ENCODE measurements at regions of chr11 and their contacts with region 1.

Region 1: GRCh38 chr11:102346748-102347461 is at the start of gene BIRC2:
- DNase-seq: peak; percentile 95
- H3K4me3 ChIP-seq: peak within 1 kb of the TSS; percentile 76
- H3K27ac ChIP-seq: peak within 1 kb of the TSS; percentile 78
- H3K4me1 ChIP-seq: peaks cover 25% of the 10 kb centered on the region
- CTCF ChIP-seq: peak; percentile 75
- total RNA-seq, gene BIRC2: 32.6 and 38.0 TPM in 2 replicates

Region 2: DNA sequence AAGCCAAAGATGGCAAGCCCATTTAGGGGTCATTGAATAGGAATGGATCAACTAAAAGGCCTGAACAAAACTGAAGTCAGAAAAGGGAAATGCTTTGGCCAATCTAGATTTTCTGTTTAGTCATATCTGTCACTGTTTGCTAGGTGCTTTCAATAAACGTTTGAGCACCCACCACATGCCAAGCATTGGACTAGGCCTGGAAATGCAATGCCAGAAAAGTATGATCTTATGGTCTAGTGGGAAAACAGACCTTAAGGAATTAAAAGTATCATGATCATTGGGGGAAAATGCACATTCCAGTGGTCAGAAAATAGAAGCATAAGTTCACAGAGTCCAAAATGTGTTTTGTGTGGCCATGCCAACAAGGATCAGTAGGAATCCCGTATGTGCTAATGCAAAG is 106.4 kb before region 1 on chr11:
- CTCF ChIA-PET with region 1: no interaction called
- POLR2A ChIA-PET with region 1: no interaction called
- intact Hi-C with region 1: no loop called
- DNase-seq: no peak
- H3K4me3 ChIP-seq: no peak overlapping the region
- H3K27ac ChIP-seq: no peak overlapping the region
- H3K4me1 ChIP-seq: peaks cover 25% of the 10 kb centered on the region
- CTCF ChIP-seq: no peak

Region 3: DNA sequence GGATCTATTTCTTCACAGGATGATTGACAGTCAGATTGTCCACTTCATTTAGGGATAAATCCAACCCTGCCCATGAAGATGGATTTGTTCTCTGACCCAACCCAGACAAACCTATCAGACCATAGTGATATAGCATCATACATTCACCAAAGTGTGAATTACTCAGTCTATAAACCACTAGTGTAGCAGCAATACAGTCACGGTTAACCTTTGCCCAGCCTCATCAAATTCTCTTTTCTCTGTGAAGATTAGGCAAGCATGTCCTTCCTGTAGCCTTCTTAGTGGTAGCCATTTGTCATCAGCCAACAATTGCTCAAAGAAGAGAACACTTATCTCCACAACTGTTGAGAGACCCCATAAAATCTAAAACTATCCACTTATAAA is 14.3 kb before region 1 on chr11:
- CTCF ChIA-PET with region 1: interaction called, 3 read pairs
- POLR2A ChIA-PET with region 1: interaction called, 10 read pairs
- intact Hi-C with region 1: no loop called
- DNase-seq: no peak
- H3K4me3 ChIP-seq: no peak overlapping the region
- H3K27ac ChIP-seq: no peak overlapping the region
- H3K4me1 ChIP-seq: no peaks in the 10 kb centered on the region
- CTCF ChIP-seq: no peak

Region 4: GRCh38 chr11:102361086-102362031 is 14.5 kb after region 1 on chr11:
- CTCF ChIA-PET with region 1: interaction called, 7 read pairs
- POLR2A ChIA-PET with region 1: interaction called, 17 read pairs
- intact Hi-C with region 1: no loop called
- DNase-seq: peak; percentile 62
- H3K4me3 ChIP-seq: no peak overlapping the region
- H3K27ac ChIP-seq: no peak overlapping the region
- H3K4me1 ChIP-seq: peaks cover 16% of the 10 kb centered on the region
- CTCF ChIP-seq: no peak

Region 5: DNA sequence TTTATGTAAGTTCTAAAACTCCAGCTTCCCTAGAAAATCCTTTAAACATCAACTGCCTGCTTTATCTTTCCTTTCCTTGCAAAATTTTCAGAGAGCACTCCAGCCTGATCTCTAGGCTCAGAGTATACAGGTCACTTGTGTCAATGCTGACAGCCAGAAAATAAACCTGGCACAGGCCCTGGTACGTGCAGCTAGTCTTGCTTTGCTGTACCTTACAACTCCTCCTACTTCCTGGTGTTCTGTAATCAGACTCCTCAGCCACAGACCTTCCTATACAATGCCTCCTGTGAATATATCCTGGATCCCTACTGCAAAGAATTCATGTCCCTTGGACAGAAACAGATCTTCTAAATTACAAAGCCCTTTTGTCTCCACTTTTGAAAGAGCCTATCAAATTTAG is 129.9 kb after region 1 on chr11:
- CTCF ChIA-PET with region 1: no interaction called
- POLR2A ChIA-PET with region 1: no interaction called
- intact Hi-C with region 1: no loop called
- DNase-seq: peak; percentile 79
- H3K4me3 ChIP-seq: no peak overlapping the region
- H3K27ac ChIP-seq: peak overlapping the region; percentile 81
- H3K4me1 ChIP-seq: peaks cover 60% of the 10 kb centered on the region
- CTCF ChIP-seq: no peak

Region 6: DNA sequence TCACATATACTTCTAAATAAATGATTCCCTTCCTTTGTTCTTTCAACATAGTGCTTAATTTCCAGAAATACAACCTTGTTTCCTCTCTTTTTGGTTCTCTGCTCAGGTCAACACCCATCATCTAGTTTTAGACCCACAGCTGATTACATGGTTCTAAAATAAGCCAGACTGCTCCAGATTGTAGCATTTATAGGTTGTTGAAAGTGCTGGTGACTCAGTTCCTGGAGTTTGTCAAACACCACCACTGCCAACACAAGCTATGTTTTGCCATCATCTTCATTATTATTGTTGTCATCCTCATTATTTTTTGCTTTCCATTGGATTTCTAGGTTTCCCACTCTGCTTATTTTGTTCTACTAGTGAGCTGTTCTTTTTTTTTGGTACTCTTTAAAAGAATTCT is 300.5 kb after region 1 on chr11:
- CTCF ChIA-PET with region 1: no interaction called
- POLR2A ChIA-PET with region 1: no interaction called
- intact Hi-C with region 1: no loop called
- DNase-seq: no peak
- H3K4me3 ChIP-seq: no peak overlapping the region
- H3K27ac ChIP-seq: no peak overlapping the region
- H3K4me1 ChIP-seq: no peaks in the 10 kb centered on the region
- CTCF ChIP-seq: no peak

Measured in OCI-LY7 (cell line).